Natural killer cell (primary cell): ENCODE measurements at regions of chr6 and their contacts with region 1.

Region 1: GRCh38 chr6:43506667-43507471 is 3.3 kb downstream of the LRRC73 start:
- DNase-seq: peak; percentile 76 to 93
- ATAC-seq: peak; percentile 71 to 83 (median 78)
- H3K4me3 ChIP-seq: no peak overlapping the region
- H3K4me3 Mint-ChIP-seq: no peak overlapping the region
- H3K27ac ChIP-seq: no peak overlapping the region
- H3K27ac Mint-ChIP-seq: peak overlapping the region; percentile 16 to 64
- H3K4me1 ChIP-seq: peaks cover 15% of the 10 kb centered on the region
- H3K4me1 Mint-ChIP-seq: peaks cover 5 to 14% of the 10 kb centered on the region in 2 donors
- H3K27me3 ChIP-seq: peaks cover 17% of the 10 kb centered on the region
- H3K27me3 Mint-ChIP-seq: peaks cover 10 to 12% of the 10 kb centered on the region in 2 donors
- CTCF ChIP-seq: peak; percentile 96

Region 2: DNA sequence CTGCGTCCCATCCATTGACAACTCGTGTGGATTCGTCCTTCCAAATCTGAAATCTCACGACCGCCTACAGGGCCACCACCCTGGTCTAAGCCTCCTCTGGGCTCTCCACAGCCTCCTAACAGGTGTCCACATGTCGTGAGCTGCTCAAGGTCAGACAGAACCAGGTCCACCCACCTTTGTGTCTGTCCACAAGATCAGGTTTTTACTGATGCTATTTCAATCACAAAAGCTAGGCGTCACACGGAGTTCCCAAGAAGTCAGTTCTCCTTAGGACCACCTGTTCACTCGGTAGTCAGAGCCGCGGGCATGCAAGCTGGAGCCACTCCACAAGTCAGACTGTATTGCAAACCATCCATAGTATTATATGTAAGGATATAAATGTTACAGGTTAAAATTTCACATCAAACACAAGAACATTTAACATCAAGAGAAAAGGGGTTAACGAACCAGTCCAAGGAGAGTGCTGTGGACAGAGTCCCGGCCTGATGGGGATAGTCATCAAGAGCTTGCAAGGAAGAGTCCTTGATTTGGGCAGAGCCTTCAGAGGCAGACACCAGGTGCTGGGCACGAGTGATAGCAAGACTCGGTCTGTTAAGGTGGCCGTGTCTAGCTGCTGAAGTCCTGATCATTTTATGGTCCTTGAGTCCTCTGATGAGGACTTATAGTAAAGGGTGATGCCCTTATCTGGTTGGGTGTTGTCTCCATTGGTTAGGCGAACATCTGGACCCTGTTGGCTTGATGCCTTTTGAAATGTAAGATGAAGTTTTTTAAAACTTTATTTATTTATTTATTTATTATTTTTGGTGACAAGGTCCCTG is 276.9 kb before region 1 on chr6:
- intact Hi-C with region 1: loop called (anchors 10 kb)
- DNase-seq: peak in 1 of 2 donors; percentile 12
- ATAC-seq: no peak
- H3K4me3 ChIP-seq: no peak overlapping the region
- H3K4me3 Mint-ChIP-seq: peak overlapping the region; percentile 85
- H3K27ac ChIP-seq: no peak overlapping the region
- H3K27ac Mint-ChIP-seq: peak overlapping the region; percentile 34 to 75
- H3K4me1 ChIP-seq: peaks cover 25% of the 10 kb centered on the region
- H3K4me1 Mint-ChIP-seq: peaks cover 4 to 5% of the 10 kb centered on the region in 2 donors
- H3K27me3 ChIP-seq: peaks cover 3% of the 10 kb centered on the region
- H3K27me3 Mint-ChIP-seq: peaks cover 9 to 11% of the 10 kb centered on the region in 2 donors
- CTCF ChIP-seq: no peak

Region 3: GRCh38 chr6:43263314-43264178 is 243.3 kb before region 1 on chr6:
- intact Hi-C with region 1: loop called (anchors 1 kb)
- DNase-seq: peak; percentile 65 to 86
- ATAC-seq: peak; percentile 76 to 99 (median 97)
- H3K4me3 ChIP-seq: no peak overlapping the region
- H3K4me3 Mint-ChIP-seq: no peak overlapping the region
- H3K27ac ChIP-seq: no peak overlapping the region
- H3K27ac Mint-ChIP-seq: no peak overlapping the region
- H3K4me1 ChIP-seq: no peaks in the 10 kb centered on the region
- H3K4me1 Mint-ChIP-seq: peaks cover 0 to 6% of the 10 kb centered on the region in 2 donors
- H3K27me3 ChIP-seq: peaks cover 3% of the 10 kb centered on the region
- H3K27me3 Mint-ChIP-seq: peaks cover 0 to 11% of the 10 kb centered on the region in 2 donors
- CTCF ChIP-seq: peak; percentile 65

Region 4: DNA sequence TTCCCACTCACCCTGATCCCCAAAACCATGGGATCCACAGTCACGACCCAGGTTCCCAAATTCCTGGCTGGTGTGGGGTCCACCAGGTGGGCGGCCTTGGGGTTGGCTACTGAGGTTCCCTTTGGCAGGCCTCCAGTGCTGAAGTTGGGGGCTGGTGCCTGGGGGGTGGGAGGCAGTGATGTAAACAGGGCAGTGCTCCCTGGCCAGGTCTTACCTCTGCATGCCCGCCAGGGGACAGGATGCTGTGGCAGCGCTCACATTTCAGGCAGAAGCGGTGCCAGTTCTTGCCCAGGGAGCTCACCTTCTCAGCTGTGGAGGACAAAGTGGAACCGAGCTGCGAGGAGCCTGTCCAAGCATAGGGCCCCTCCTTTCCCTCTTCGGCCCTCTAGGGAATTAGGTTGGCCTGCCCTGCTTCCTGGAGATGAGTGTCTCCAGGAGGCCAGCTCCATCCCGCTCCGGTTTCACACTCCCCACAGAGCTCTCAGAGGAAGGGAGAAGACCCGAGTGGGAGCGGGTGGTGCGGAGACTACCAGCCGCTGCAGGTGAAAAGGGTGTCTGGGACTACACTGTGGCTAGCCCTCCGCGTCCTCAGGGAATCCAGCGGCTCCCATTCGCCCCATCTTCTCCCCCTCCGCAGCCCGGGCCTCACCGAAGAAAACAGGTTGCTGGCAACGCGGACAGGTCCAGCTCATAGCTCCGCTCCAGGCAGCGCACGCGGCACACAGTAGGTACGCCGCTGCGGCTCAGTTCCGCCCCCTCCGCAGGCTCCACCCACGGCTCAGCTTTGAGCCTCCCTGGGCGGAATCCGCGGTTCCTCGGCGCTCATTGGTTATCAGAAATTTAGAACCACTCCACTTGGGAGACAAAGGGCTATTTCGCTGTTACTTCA is 198.5 kb before region 1 on chr6 and contains the start of gene CRIP3:
- intact Hi-C with region 1: loop called (anchors 2 kb)
- DNase-seq: peak; percentile 33 to 72
- ATAC-seq: peak; percentile 67 to 91 (median 86)
- H3K4me3 ChIP-seq: peak within 1 kb of the TSS; percentile 26
- H3K4me3 Mint-ChIP-seq: peak within 1 kb of the TSS; percentile 75
- H3K27ac ChIP-seq: no peak within 1 kb of the TSS
- H3K27ac Mint-ChIP-seq: peak within 1 kb of the TSS in 1 of 2 donors; percentile 52
- H3K4me1 ChIP-seq: peaks cover 13% of the 10 kb centered on the region
- H3K4me1 Mint-ChIP-seq: peaks cover 0 to 9% of the 10 kb centered on the region in 2 donors
- H3K27me3 ChIP-seq: no peaks in the 10 kb centered on the region
- H3K27me3 Mint-ChIP-seq: peaks cover 3 to 9% of the 10 kb centered on the region in 2 donors
- CTCF ChIP-seq: peak; percentile 36
- total RNA-seq, gene CRIP3: 3.6 to 5.3 (median 4.3) TPM

Region 5: DNA sequence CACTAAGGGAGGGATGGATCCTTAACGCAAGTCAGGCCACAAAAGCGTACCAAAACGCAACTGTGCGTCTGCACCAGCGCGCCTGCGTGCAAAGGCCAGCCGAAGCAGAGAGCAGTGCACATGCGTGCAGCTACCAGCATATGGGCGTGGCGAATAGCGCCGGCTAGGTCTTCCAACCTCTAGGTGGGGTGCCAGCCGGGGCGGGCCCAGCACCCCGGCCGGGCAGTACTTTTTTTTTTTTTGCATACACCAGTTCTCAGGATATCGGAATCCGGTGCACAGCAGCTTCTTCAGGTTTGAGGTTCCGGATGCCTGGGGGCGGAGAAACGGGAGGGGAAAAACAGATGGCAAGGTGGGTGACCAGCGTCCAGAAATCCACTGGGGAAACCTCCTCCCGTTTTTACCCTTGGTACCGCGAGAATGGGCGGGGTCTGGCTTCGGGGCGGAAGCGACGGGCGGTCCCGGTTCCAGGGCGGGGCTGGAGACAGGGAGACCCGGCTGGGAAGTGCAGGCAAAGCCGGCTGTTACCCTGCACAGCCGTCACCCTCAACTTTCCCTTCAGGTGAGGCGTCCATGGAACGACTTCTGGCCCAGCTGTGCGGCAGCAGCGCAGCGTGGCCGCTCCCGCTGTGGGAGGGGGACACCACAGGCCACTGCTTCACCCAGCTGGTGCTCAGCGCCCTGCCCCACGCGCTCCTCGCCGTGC is 79.3 kb before region 1 on chr6 and contains the start of gene ABCC10:
- intact Hi-C with region 1: no loop called
- DNase-seq: peak; percentile 88 to 98
- ATAC-seq: peak; percentile 94 to 98 (median 94)
- H3K4me3 ChIP-seq: peak within 1 kb of the TSS; percentile 77
- H3K4me3 Mint-ChIP-seq: peak within 1 kb of the TSS; percentile 97
- H3K27ac ChIP-seq: peak within 1 kb of the TSS; percentile 70
- H3K27ac Mint-ChIP-seq: peak within 1 kb of the TSS; percentile 91 to 92
- H3K4me1 ChIP-seq: peaks cover 27% of the 10 kb centered on the region
- H3K4me1 Mint-ChIP-seq: peaks cover 19 to 29% of the 10 kb centered on the region in 2 donors
- H3K27me3 ChIP-seq: no peaks in the 10 kb centered on the region
- H3K27me3 Mint-ChIP-seq: no peaks in the 10 kb centered on the region
- CTCF ChIP-seq: peak; percentile 12
- total RNA-seq, gene ABCC10: 74.6 to 90.5 (median 81.9) TPM

Region 6: DNA sequence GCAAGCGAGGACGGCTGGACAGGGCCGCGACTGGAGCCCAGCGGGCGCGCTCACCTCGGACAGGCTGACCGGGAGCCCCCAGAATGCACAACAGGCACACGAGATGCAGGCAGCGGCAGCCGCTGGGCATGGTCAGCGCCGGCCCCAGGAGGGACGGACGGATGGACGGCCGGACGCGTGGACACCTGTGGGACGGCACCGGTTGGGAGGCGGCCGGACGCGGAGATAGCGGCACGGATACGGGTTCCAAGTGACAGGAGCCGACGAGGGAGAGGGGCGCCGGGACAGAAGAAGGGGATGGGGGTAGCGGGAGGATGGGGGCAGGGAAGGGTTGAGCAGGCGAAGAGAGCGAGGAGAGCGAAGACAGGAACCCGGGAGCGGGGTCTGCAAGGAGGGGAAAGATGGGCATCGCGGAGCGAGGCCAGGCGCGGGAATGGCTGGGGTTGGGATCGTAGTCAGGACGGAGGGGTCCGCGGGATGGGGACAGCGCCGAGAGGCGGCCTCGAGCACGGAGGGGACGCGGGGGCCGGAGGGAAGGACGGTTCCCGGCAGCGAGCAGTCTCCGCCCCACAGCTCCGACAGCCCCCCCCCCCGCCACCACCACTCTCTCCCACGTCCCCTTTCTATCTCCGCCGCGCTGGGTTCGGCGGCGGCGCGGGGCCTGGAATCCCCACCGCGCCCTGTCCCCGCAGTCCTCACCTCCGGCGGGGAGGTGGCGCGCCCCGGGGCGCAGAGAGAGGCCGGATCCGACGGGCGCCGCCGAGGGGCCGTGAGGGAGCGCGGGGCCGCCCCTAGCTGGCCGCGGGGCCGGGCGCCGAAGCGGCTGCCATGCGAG is 52.0 kb before region 1 on chr6:
- intact Hi-C with region 1: loop called (anchors 1 kb)
- DNase-seq: peak; percentile 31 to 66
- ATAC-seq: peak; percentile 49 to 68 (median 65)
- H3K4me3 ChIP-seq: peak overlapping the region; percentile 46
- H3K4me3 Mint-ChIP-seq: peak overlapping the region; percentile 91
- H3K27ac ChIP-seq: no peak overlapping the region
- H3K27ac Mint-ChIP-seq: peak overlapping the region; percentile 54 to 78
- H3K4me1 ChIP-seq: peaks cover 16% of the 10 kb centered on the region
- H3K4me1 Mint-ChIP-seq: peaks cover 16 to 25% of the 10 kb centered on the region in 2 donors
- H3K27me3 ChIP-seq: peaks cover 2% of the 10 kb centered on the region
- H3K27me3 Mint-ChIP-seq: peaks cover 7 to 8% of the 10 kb centered on the region in 2 donors
- CTCF ChIP-seq: peak; percentile 89